Calu3 (cell line): ENCODE measurements at regions of chr12 and their contacts with region 1.

Region 1: GRCh38 chr12:44015335-44015941 is 179.6 kb downstream of the TMEM117 start:
- DNase-seq: peak; percentile 1
- H3K4me3 Mint-ChIP-seq: no peak overlapping the region
- H3K27ac Mint-ChIP-seq: no peak overlapping the region
- H3K4me1 Mint-ChIP-seq: no peaks in the 10 kb centered on the region
- H3K27me3 Mint-ChIP-seq: no peaks in the 10 kb centered on the region
- CTCF ChIP-seq: no peak

Region 2: DNA sequence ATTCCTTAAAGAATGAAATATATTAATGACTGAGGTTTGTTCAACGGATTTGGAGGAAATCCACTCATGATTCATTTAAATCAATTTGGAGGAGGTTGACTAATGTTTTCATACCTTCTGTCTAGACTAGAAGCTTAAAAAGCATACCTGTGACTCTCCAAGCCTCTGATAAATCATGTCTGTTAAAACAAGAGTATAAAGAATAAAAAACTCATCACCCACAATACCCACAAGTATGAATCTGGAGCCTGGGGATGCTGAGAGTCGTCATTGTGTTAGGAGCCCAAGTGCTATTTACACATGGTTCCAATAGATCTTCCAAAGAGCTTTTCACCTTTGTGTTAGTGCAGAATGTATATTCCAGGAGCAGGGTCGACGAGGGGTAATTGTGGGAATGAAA is 376.6 kb before region 1 on chr12:
- CTCF ChIA-PET with region 1: no interaction called
- intact Hi-C with region 1: no loop called
- DNase-seq: no peak
- H3K4me3 Mint-ChIP-seq: no peak overlapping the region
- H3K27ac Mint-ChIP-seq: no peak overlapping the region
- H3K4me1 Mint-ChIP-seq: no peaks in the 10 kb centered on the region
- H3K27me3 Mint-ChIP-seq: peaks cover 16% of the 10 kb centered on the region
- CTCF ChIP-seq: no peak

Region 3: GRCh38 chr12:44875954-44876553 is 860.6 kb after region 1 on chr12 and contains the start of gene NELL2:
- CTCF ChIA-PET with region 1: interaction called, 5 read pairs
- intact Hi-C with region 1: loop called (anchors 5 kb)
- DNase-seq: peak; percentile 24
- H3K4me3 Mint-ChIP-seq: peak within 1 kb of the TSS; percentile 90
- H3K27ac Mint-ChIP-seq: no peak within 1 kb of the TSS
- H3K4me1 Mint-ChIP-seq: peaks cover 24% of the 10 kb centered on the region
- H3K27me3 Mint-ChIP-seq: peaks cover 49% of the 10 kb centered on the region
- CTCF ChIP-seq: no peak
- total RNA-seq, gene NELL2: 0.42 TPM in 1 of 2 replicates, not detected in the other